Transverse colon (tissue), 4 donors: ENCODE measurements at regions of chr14 and their contacts with region 1.

Region 1: GRCh38 chr14:47917345-47917954 is 242.0 kb upstream of the MDGA2 start:
- DNase-seq: no peak
- H3K4me3 ChIP-seq: no peak overlapping the region
- H3K27ac ChIP-seq: no peak overlapping the region
- H3K4me1 ChIP-seq: no peaks in the 10 kb centered on the region
- H3K27me3 ChIP-seq: no peaks in the 10 kb centered on the region
- CTCF ChIP-seq: peak in 2 of 5 experiments; percentile 33 to 37
- EP300 ChIP-seq: no peak
- POLR2A ChIP-seq: no peak

Region 2: GRCh38 chr14:47857646-47858045 is 59.8 kb before region 1 on chr14:
- in situ Hi-C with region 1: no loop called
- intact Hi-C with region 1: no loop called
- DNase-seq: no peak
- H3K4me3 ChIP-seq: no peak overlapping the region
- H3K27ac ChIP-seq: no peak overlapping the region
- H3K4me1 ChIP-seq: no peaks in the 10 kb centered on the region
- H3K27me3 ChIP-seq: no peaks in the 10 kb centered on the region
- CTCF ChIP-seq: no peak
- EP300 ChIP-seq: no peak
- POLR2A ChIP-seq: no peak

Region 3: GRCh38 chr14:47959740-47960139 is 42.3 kb after region 1 on chr14:
- in situ Hi-C with region 1: no loop called
- intact Hi-C with region 1: no loop called
- DNase-seq: no peak
- H3K4me3 ChIP-seq: no peak overlapping the region
- H3K27ac ChIP-seq: no peak overlapping the region
- H3K4me1 ChIP-seq: no peaks in the 10 kb centered on the region
- H3K27me3 ChIP-seq: no peaks in the 10 kb centered on the region
- CTCF ChIP-seq: no peak
- EP300 ChIP-seq: no peak
- POLR2A ChIP-seq: no peak

Region 4: DNA sequence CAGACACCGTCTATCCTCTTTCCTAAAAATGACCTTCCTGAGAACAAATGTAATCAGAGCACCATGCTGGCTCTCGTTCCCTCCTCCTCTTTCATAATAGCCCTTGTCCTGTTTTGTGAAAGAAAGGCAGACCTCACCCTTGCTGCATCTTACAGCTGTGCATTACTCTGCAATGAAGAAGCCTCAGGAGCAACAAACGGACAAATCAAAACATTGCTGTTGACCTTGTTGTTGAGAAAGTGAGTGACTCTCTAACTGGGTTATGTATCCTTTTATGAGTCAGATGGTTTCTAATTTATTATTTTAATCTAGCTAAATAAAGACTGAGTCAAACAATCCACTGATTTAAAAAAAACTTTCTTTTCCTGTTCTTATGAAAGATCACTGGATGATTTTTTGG is 1487.8 kb after region 1 on chr14:
- in situ Hi-C with region 1: no loop called
- intact Hi-C with region 1: loop called (anchors 10 kb)
- DNase-seq: no peak
- H3K4me3 ChIP-seq: no peak overlapping the region
- H3K27ac ChIP-seq: no peak overlapping the region
- H3K4me1 ChIP-seq: no peaks in the 10 kb centered on the region
- H3K27me3 ChIP-seq: no peaks in the 10 kb centered on the region
- CTCF ChIP-seq: no peak
- EP300 ChIP-seq: no peak
- POLR2A ChIP-seq: no peak

Region 5: GRCh38 chr14:49585803-49586672 is 1668.6 kb after region 1 on chr14 and contains the start of gene RPS29:
- in situ Hi-C with region 1: no loop called
- intact Hi-C with region 1: no loop called
- DNase-seq: peak; percentile 98
- H3K4me3 ChIP-seq: peak within 1 kb of the TSS; percentile 68 to 96 (median 80)
- H3K27ac ChIP-seq: peak within 1 kb of the TSS; percentile 93 to 97 (median 96)
- H3K4me1 ChIP-seq: peaks cover 7 to 27% (median 23%) of the 10 kb centered on the region in 4 donors
- H3K27me3 ChIP-seq: no peaks in the 10 kb centered on the region
- CTCF ChIP-seq: no peak
- EP300 ChIP-seq: no peak
- POLR2A ChIP-seq: peak; percentile 98
- total RNA-seq, gene RPS29: 2,435 to 6,129 (median 4,291) TPM